ENCODE measurements at regions of chr13 and their contacts with region 1.

Region 1: GRCh38 chr13:44160591-44161191 is 212.9 kb upstream of the SERP2 start:
- DNase-seq: peak; percentile 72
- H3K4me3 ChIP-seq: no peak overlapping the region
- H3K27ac ChIP-seq: peak overlapping the region; percentile 95
- H3K4me1 ChIP-seq: peaks cover 33% of the 10 kb centered on the region
- H3K27me3 ChIP-seq: no peaks in the 10 kb centered on the region
- CTCF ChIP-seq: no peak

Region 2: DNA sequence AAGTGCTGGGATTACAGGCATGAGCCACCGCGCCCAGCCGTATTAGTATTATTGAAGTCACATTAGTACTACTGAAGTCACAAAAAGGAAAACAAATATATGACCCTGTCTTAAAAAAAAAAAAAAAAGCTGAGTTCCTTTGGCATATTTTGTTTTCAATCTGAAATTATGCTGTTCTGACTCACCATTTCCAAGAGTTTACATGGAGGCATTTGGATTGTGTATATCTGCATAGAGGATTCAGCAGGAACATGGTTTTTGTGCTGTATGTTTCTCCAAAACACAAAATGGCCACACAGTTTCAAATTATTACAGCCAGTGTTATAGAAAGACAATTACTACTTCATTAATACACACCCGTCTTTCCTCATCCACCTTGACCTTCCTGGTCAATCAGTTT is 518.9 kb after region 1 on chr13:
- CTCF ChIA-PET with region 1: interaction called, 24 read pairs
- dilution Hi-C with region 1: no loop called
- in situ Hi-C with region 1: no loop called
- intact Hi-C with region 1: no loop called
- DNase-seq: no peak
- H3K4me3 ChIP-seq: no peak overlapping the region
- H3K27ac ChIP-seq: no peak overlapping the region
- H3K4me1 ChIP-seq: no peaks in the 10 kb centered on the region
- H3K27me3 ChIP-seq: no peaks in the 10 kb centered on the region
- CTCF ChIP-seq: no peak

Measured in mammary epithelial cell (primary cell).